ENCODE measurements at regions of chr9 and their contacts with region 1.

Region 1: GRCh38 chr9:133992780-133993634 is 883 bp upstream of the VAV2 start:
- DNase-seq: peak; percentile 90
- ATAC-seq: peak; percentile 79
- H3K4me3 ChIP-seq: peak overlapping the region; percentile 31 to 86 (median 81)
- H3K4me3 Mint-ChIP-seq: peak overlapping the region; percentile 89
- H3K27ac ChIP-seq: peak overlapping the region; percentile 26 to 83
- H3K27ac Mint-ChIP-seq: peak overlapping the region; percentile 86
- H3K4me1 ChIP-seq: peaks cover 27 to 42% of the 10 kb centered on the region in 2 donors
- H3K4me1 Mint-ChIP-seq: peaks cover 30% of the 10 kb centered on the region
- H3K27me3 ChIP-seq: no peaks in the 10 kb centered on the region
- H3K27me3 Mint-ChIP-seq: no peaks in the 10 kb centered on the region
- CTCF ChIP-seq: peak; percentile 53

Region 2: GRCh38 chr9:133742849-133743444 is 250.1 kb before region 1 on chr9:
- CTCF ChIA-PET with region 1: interaction called, 23 read pairs
- POLR2A ChIA-PET with region 1: no interaction called
- intact Hi-C with region 1: loop called (anchors 1 kb)
- DNase-seq: peak; percentile 82
- ATAC-seq: peak; percentile 91
- H3K4me3 ChIP-seq: no peak overlapping the region
- H3K4me3 Mint-ChIP-seq: no peak overlapping the region
- H3K27ac ChIP-seq: no peak overlapping the region
- H3K27ac Mint-ChIP-seq: no peak overlapping the region
- H3K4me1 ChIP-seq: peaks cover 8 to 11% of the 10 kb centered on the region in 2 donors
- H3K4me1 Mint-ChIP-seq: peaks cover 4% of the 10 kb centered on the region
- H3K27me3 ChIP-seq: peaks cover 0 to 8% (median 2%) of the 10 kb centered on the region in 4 experiments
- H3K27me3 Mint-ChIP-seq: peaks cover 33% of the 10 kb centered on the region
- CTCF ChIP-seq: peak; percentile 97

Region 3: DNA sequence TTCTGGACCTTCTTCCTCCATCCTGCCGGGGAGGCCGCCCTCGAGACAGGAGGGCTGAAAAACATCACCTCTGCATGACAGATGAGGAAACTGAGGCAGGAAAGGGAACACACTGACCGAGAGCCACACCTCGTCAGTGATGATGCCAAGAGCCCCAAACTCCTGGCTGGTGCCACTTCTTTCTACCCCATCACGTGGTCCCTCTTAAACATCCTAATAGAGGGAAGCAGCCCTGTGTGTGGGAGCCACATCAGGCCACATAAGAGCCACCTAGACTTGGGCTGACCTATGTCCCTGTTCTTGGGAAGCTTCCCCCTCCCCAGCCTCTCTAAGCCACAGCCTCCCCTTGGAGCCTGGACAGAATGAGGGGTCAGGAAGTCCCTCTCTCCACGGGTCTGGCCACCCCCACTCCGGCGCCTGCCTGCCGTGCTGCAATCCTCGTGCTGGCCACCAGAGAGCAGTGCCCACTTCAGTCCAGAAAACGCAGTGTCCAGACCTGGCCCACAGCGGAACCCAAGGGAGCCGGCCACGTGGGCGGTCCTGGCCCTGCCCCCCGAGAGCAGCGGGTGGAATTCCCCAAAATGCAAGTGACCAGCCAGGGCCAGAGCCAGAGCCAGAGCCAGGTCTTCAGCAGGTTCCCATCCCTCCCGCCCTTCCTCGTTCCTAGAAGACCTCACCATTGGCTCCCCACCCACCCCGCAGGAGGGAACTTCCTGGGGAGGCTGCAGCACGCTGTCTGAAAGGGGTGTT is 200.1 kb before region 1 on chr9:
- CTCF ChIA-PET with region 1: interaction called, 561 read pairs
- POLR2A ChIA-PET with region 1: interaction called, 18 read pairs
- intact Hi-C with region 1: loop called (anchors 1 kb)
- DNase-seq: peak; percentile 77
- ATAC-seq: peak; percentile 85
- H3K4me3 ChIP-seq: peak overlapping the region in 3 of 5 experiments; percentile 11 to 43 (median 20)
- H3K4me3 Mint-ChIP-seq: peak overlapping the region; percentile 52
- H3K27ac ChIP-seq: peak overlapping the region; percentile 17 to 41
- H3K27ac Mint-ChIP-seq: peak overlapping the region; percentile 70
- H3K4me1 ChIP-seq: peaks cover 48 to 56% of the 10 kb centered on the region in 2 donors
- H3K4me1 Mint-ChIP-seq: peaks cover 69% of the 10 kb centered on the region
- H3K27me3 ChIP-seq: no peaks in the 10 kb centered on the region
- H3K27me3 Mint-ChIP-seq: no peaks in the 10 kb centered on the region
- CTCF ChIP-seq: peak; percentile 87

Region 4: DNA sequence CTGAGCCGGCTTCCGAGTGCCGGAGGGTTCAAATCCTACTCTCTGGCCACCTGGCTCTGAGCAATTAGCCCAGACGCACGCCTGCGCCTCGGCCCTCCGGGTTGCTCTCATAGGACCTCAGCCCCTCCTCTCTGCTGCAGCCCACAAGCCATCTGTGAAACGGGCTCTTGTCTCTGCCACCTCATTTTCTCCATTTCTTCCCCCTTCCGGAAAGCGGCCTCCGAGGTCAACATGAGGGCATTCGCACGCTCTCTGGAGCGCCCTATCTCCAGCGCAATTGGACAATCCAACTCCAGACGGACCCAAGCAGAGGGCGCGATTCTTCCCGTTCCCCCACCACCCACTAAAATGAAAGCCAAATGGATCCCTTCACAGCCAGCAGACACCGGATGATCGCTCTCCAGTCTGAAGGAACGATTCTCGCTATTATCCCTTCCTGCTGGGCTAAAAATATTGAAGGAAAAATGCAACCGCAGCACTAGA is 42.3 kb before region 1 on chr9:
- CTCF ChIA-PET with region 1: interaction called, 43 read pairs
- POLR2A ChIA-PET with region 1: interaction called, 19 read pairs
- intact Hi-C with region 1: loop called (anchors 1 kb)
- DNase-seq: no peak
- ATAC-seq: no peak
- H3K4me3 ChIP-seq: no peak overlapping the region
- H3K4me3 Mint-ChIP-seq: peak overlapping the region; percentile 37
- H3K27ac ChIP-seq: peak overlapping the region in 1 of 2 donors; percentile 37
- H3K27ac Mint-ChIP-seq: peak overlapping the region; percentile 56
- H3K4me1 ChIP-seq: peaks cover 37 to 64% of the 10 kb centered on the region in 2 donors
- H3K4me1 Mint-ChIP-seq: peaks cover 74% of the 10 kb centered on the region
- H3K27me3 ChIP-seq: no peaks in the 10 kb centered on the region
- H3K27me3 Mint-ChIP-seq: no peaks in the 10 kb centered on the region
- CTCF ChIP-seq: no peak

Region 5: GRCh38 chr9:134024828-134025605 is 32.0 kb after region 1 on chr9 and contains the start of gene BRD3OS:
- CTCF ChIA-PET with region 1: interaction called, 27 read pairs
- POLR2A ChIA-PET with region 1: no interaction called
- intact Hi-C with region 1: loop called (anchors 1 kb)
- DNase-seq: peak; percentile 97
- ATAC-seq: peak; percentile 93
- H3K4me3 ChIP-seq: peak within 1 kb of the TSS; percentile 53 to 85 (median 76)
- H3K4me3 Mint-ChIP-seq: peak within 1 kb of the TSS; percentile 86
- H3K27ac ChIP-seq: peak within 1 kb of the TSS; percentile 34 to 69
- H3K27ac Mint-ChIP-seq: peak within 1 kb of the TSS; percentile 88
- H3K4me1 ChIP-seq: peaks cover 6 to 19% of the 10 kb centered on the region in 2 donors
- H3K4me1 Mint-ChIP-seq: peaks cover 11% of the 10 kb centered on the region
- H3K27me3 ChIP-seq: no peaks in the 10 kb centered on the region
- H3K27me3 Mint-ChIP-seq: no peaks in the 10 kb centered on the region
- CTCF ChIP-seq: no peak
- total RNA-seq, gene BRD3OS: 25.3 and 26.8 TPM in 2 replicates

Measured in B cell (primary cell).